Cardiac septum (tissue), 1 donor: ENCODE measurements at regions of chr3 and their contacts with region 1.

Region 1: GRCh38 chr3:15557511-15557946 is 36.0 kb upstream of the COLQ start:
- DNase-seq: no peak

Region 2: GRCh38 chr3:15205934-15206661 is 351.4 kb before region 1 on chr3 and contains the start of gene CAPN7:
- intact Hi-C with region 1: loop called (anchors 2 kb)
- DNase-seq: peak; percentile 98
- total RNA-seq, gene CAPN7: 29.2 TPM

Region 3: GRCh38 chr3:15427182-15427880 is 130.2 kb before region 1 on chr3 and contains the starts of genes EAF1 and METTL6:
- intact Hi-C with region 1: loop called (anchors 2 kb)
- DNase-seq: peak; percentile 93
- total RNA-seq, gene EAF1: 10.3 TPM
- total RNA-seq, gene METTL6: 11.7 TPM

Region 4: DNA sequence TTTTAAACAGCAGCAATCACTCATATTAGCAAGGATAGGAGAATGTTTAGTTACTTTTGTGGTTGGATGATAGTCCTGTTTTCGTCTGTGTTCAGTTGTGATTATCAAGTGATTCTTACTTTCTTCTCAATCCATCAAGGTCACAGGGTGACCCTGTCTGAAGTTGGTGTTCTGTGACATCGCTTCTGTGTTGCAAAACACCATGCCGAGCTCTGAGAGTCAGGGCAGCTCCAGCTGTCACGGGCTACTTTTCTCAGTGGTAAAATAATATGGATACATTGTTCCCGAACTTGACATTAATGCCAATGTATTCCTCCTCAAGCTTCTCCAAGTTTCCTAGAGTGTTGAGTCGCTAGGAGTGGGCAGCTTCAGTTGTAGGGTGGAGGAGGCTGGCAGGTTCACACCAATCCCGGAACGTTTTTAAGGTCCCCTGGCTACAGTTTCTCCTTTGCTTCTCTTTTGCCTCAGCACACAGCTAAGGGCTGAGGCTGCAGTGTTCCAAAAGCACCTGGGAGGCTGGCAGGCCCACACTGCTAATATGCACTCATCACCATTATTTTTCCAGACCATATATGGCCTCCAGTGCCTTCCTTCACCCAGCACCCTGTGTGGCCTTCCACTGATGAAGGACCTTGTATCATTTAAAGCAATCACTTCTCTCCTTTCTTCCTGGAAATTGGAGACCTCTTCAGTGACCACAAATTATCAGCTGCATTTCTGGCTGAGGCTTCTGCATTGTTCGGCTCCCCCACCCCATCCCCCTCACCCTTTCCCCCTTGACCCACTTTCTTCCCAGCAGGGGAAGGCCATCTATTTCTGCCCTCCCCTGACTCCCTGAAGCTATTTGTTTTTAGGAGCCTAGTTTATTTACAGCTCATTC is 61.8 kb before region 1 on chr3:
- intact Hi-C with region 1: loop called (anchors 2 kb)
- DNase-seq: no peak

Region 5: DNA sequence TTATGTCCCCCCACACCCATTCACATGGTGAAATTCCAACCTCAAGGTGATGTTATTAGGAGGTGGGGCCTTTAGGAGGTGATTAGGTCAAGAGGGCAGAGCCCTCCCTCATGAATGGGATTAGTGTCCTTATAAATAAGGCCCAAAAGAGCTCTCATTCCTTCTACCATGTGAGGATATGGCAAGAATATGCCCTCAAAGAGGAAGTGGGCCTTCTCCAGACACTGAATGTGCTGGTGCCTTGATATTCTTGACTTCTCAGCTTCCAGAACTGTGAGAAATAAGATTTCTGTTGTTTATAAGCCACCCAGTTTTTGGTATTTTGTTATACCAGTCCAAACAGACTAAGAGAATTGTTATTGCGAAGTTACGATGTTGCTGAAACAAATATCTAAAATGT is 145.8 kb after region 1 on chr3:
- intact Hi-C with region 1: no loop called
- DNase-seq: no peak